HCT116 (cell line): ENCODE measurements at regions of chr6 and their contacts with region 1.

Region 1: DNA sequence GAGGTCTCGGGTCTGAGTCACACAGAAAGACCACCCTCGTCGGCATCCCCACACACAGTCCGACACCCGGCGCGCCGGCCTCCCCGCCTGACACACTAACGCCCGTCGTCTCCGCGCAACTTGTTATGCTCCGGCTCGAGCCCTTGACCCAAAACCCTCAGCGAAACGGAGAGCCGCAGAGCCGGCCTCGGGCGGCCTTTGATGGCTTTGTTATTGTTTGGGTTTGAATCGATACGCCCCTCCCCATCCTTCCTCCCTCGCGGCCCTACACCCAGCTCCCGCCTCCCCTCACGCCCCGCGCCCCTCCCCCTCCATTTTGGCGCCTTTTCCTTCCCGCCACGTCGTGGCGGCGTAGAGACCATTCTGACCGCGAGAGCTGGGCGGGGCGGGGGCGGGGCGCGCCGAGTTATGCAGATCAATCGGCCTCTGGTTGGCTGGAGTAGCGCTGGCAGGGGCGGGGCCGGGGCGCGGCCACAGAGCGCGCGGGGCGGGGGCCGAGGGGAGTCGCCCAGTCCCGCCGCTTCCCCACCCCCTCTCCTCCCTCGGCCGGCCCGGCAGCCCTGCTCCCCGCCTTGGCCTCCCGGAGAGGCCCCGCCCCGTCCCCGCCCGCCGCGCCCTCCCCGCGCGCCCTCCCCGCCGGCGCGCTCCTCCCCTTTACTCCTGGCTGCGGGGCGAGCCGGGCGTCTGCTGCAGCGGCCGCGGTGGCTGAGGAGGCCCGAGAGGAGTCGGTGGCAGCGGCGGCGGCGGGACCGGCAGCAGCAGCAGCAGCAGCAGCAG is at the start of gene PIM1:
- DNase-seq: peak; percentile 87
- ATAC-seq: peak; percentile 87
- H3K4me3 ChIP-seq: peak within 1 kb of the TSS; percentile 77 to 81
- H3K27ac ChIP-seq: peak within 1 kb of the TSS; percentile 73; the same call in 1 of the 2 replicates
- H3K4me1 ChIP-seq: peaks cover 19 to 34% of the 10 kb centered on the region in 2 experiments
- H3K27me3 ChIP-seq: no peaks in the 10 kb centered on the region
- CTCF ChIP-seq: no peak
- POLR2A ChIP-seq: peak; percentile 25
- RAD21 ChIP-seq: no peak
- total RNA-seq, gene PIM1: 26.2 TPM

Region 2: GRCh38 chr6:37029249-37029971 is 140.3 kb before region 1 on chr6:
- CTCF ChIA-PET with region 1: interaction called, 33 read pairs
- POLR2A ChIA-PET with region 1: no interaction called
- RAD21 ChIA-PET with region 1: interaction called in 1 of 2 experiments, 5 read pairs
- intact Hi-C with region 1: no loop called
- DNase-seq: peak; percentile 79
- ATAC-seq: peak; percentile 74
- H3K4me3 ChIP-seq: no peak overlapping the region
- H3K27ac ChIP-seq: no peak overlapping the region
- H3K4me1 ChIP-seq: peaks cover 16 to 40% of the 10 kb centered on the region in 2 experiments
- H3K27me3 ChIP-seq: no peaks in the 10 kb centered on the region
- CTCF ChIP-seq: peak in 2 of 3 experiments; percentile 70 to 80; a peak in 4 of 6 replicates
- POLR2A ChIP-seq: no peak
- RAD21 ChIP-seq: no peak

Region 3: GRCh38 chr6:37051138-37052026 is 118.3 kb before region 1 on chr6:
- CTCF ChIA-PET with region 1: interaction called, 52 read pairs
- POLR2A ChIA-PET with region 1: interaction called, 24 read pairs
- RAD21 ChIA-PET with region 1: interaction called, 8 to 25 read pairs
- intact Hi-C with region 1: loop called (anchors 1 kb)
- DNase-seq: peak; percentile 44
- ATAC-seq: peak; percentile 89
- H3K4me3 ChIP-seq: no peak overlapping the region
- H3K27ac ChIP-seq: no peak overlapping the region
- H3K4me1 ChIP-seq: peaks cover 8 to 38% of the 10 kb centered on the region in 2 experiments
- H3K27me3 ChIP-seq: no peaks in the 10 kb centered on the region
- CTCF ChIP-seq: peak in 2 of 3 experiments; percentile 90 to 91; a peak in 4 of 6 replicates
- POLR2A ChIP-seq: no peak
- RAD21 ChIP-seq: no peak

Region 4: GRCh38 chr6:37059344-37060206 is 110.1 kb before region 1 on chr6:
- CTCF ChIA-PET with region 1: interaction called, 31 read pairs
- POLR2A ChIA-PET with region 1: interaction called, 24 read pairs
- RAD21 ChIA-PET with region 1: interaction called in 1 of 2 experiments, 5 read pairs
- intact Hi-C with region 1: loop called (anchors 1 kb)
- DNase-seq: peak; percentile 96
- ATAC-seq: peak; percentile 84
- H3K4me3 ChIP-seq: peak overlapping the region; percentile 24 to 48
- H3K27ac ChIP-seq: peak overlapping the region; percentile 94
- H3K4me1 ChIP-seq: peaks cover 32 to 59% of the 10 kb centered on the region in 2 experiments
- H3K27me3 ChIP-seq: no peaks in the 10 kb centered on the region
- CTCF ChIP-seq: peak in 2 of 3 experiments; percentile 70 to 84; a peak in 4 of 6 replicates
- POLR2A ChIP-seq: no peak
- RAD21 ChIP-seq: no peak

Region 5: GRCh38 chr6:37232430-37233017 is 62.8 kb after region 1 on chr6:
- CTCF ChIA-PET with region 1: no interaction called
- POLR2A ChIA-PET with region 1: no interaction called
- RAD21 ChIA-PET with region 1: no interaction called
- intact Hi-C with region 1: no loop called
- DNase-seq: no peak
- ATAC-seq: no peak
- H3K4me3 ChIP-seq: no peak overlapping the region
- H3K27ac ChIP-seq: no peak overlapping the region
- H3K4me1 ChIP-seq: peaks cover 0 to 7% of the 10 kb centered on the region in 2 experiments; a peak in 1 of 4 replicates
- H3K27me3 ChIP-seq: no peaks in the 10 kb centered on the region
- CTCF ChIP-seq: no peak
- POLR2A ChIP-seq: no peak
- RAD21 ChIP-seq: no peak